ENCODE measurements at regions of chr1 and their contacts with region 1.

Region 1: GRCh38 chr1:62735491-62736171 is 47.4 kb upstream of the DOCK7 start:
- DNase-seq: no peak
- ATAC-seq: peak in 1 of 2 donors; percentile 52
- H3K4me3 ChIP-seq: no peak overlapping the region
- H3K27ac ChIP-seq: no peak overlapping the region
- H3K4me1 ChIP-seq: peaks cover 5% of the 10 kb centered on the region
- H3K27me3 ChIP-seq: no peaks in the 10 kb centered on the region

Region 2: GRCh38 chr1:62514746-62515423 is 220.7 kb before region 1 on chr1:
- intact Hi-C with region 1: loop called in 1 of 4 experiments (anchors 5 kb)
- DNase-seq: no peak
- ATAC-seq: no peak
- H3K4me3 ChIP-seq: no peak overlapping the region
- H3K27ac ChIP-seq: no peak overlapping the region
- H3K4me1 ChIP-seq: no peaks in the 10 kb centered on the region
- H3K27me3 ChIP-seq: no peaks in the 10 kb centered on the region

Region 3: GRCh38 chr1:62687903-62688686 is 47.5 kb before region 1 on chr1 and contains the start of gene DOCK7:
- intact Hi-C with region 1: loop called in 1 of 4 experiments (anchors 10 kb)
- DNase-seq: peak; percentile 83 to 91 (median 90)
- ATAC-seq: peak; percentile 92 to 94
- H3K4me3 ChIP-seq: peak within 1 kb of the TSS; percentile 100
- H3K27ac ChIP-seq: peak within 1 kb of the TSS; percentile 94
- H3K4me1 ChIP-seq: peaks cover 4% of the 10 kb centered on the region
- H3K27me3 ChIP-seq: no peaks in the 10 kb centered on the region
- total RNA-seq, gene DOCK7: 11.4 to 17.9 (median 13.3) TPM

Region 4: GRCh38 chr1:62810420-62811274 is 75.0 kb after region 1 on chr1:
- intact Hi-C with region 1: no loop called
- DNase-seq: no peak
- ATAC-seq: no peak
- H3K4me3 ChIP-seq: no peak overlapping the region
- H3K27ac ChIP-seq: no peak overlapping the region
- H3K4me1 ChIP-seq: no peaks in the 10 kb centered on the region
- H3K27me3 ChIP-seq: no peaks in the 10 kb centered on the region

Measured in right cardiac atrium (tissue), 5 donors.